Activated CD8-positive, alpha-beta memory T cell treated with anti-CD3 and anti-CD28 coated beads, Interleukin-2, amount 10 ng/mL, durations not matched to agents 7 days and 5 days (primary cell): ENCODE measurements at regions of chr5 and their contacts with region 1.

Region 1: GRCh38 chr5:95846554-95847260 is 24.2 kb upstream of the GLRX start:
- DNase-seq: peak; percentile 77
- ATAC-seq: peak; percentile 57
- H3K4me3 Mint-ChIP-seq: no peak overlapping the region
- H3K27ac Mint-ChIP-seq: no peak overlapping the region
- H3K4me1 Mint-ChIP-seq: peaks cover 39% of the 10 kb centered on the region
- H3K27me3 Mint-ChIP-seq: peaks cover 14% of the 10 kb centered on the region

Region 2: GRCh38 chr5:95646554-95647431 is 199.9 kb before region 1 on chr5 and contains the start of gene RFESD:
- CTCF ChIA-PET with region 1: interaction called, 25 read pairs
- DNase-seq: peak; percentile 98
- ATAC-seq: peak; percentile 97
- H3K4me3 Mint-ChIP-seq: peak within 1 kb of the TSS; percentile 75
- H3K27ac Mint-ChIP-seq: peak within 1 kb of the TSS; percentile 88
- H3K4me1 Mint-ChIP-seq: peaks cover 42% of the 10 kb centered on the region
- H3K27me3 Mint-ChIP-seq: no peaks in the 10 kb centered on the region
- total RNA-seq, gene RFESD: 3.0 to 3.3 TPM

Region 3: GRCh38 chr5:95664204-95664786 is 182.4 kb before region 1 on chr5:
- CTCF ChIA-PET with region 1: interaction called, 29 read pairs
- DNase-seq: no peak
- ATAC-seq: no peak
- H3K4me3 Mint-ChIP-seq: no peak overlapping the region
- H3K27ac Mint-ChIP-seq: no peak overlapping the region
- H3K4me1 Mint-ChIP-seq: peaks cover 1% of the 10 kb centered on the region
- H3K27me3 Mint-ChIP-seq: peaks cover 4% of the 10 kb centered on the region

Region 4: GRCh38 chr5:95822542-95823181 is 24.0 kb before region 1 on chr5 and contains the start of gene GLRX:
- CTCF ChIA-PET with region 1: interaction called, 20 read pairs
- DNase-seq: peak; percentile 80
- ATAC-seq: peak; percentile 54
- H3K4me3 Mint-ChIP-seq: peak within 1 kb of the TSS; percentile 93
- H3K27ac Mint-ChIP-seq: peak within 1 kb of the TSS; percentile 90
- H3K4me1 Mint-ChIP-seq: peaks cover 59% of the 10 kb centered on the region
- H3K27me3 Mint-ChIP-seq: no peaks in the 10 kb centered on the region
- total RNA-seq, gene GLRX: 65.3 to 67.1 TPM

Region 5: GRCh38 chr5:95858661-95859326 is 12.1 kb after region 1 on chr5:
- CTCF ChIA-PET with region 1: interaction called, 11 read pairs
- DNase-seq: peak; percentile 94
- ATAC-seq: peak; percentile 95
- H3K4me3 Mint-ChIP-seq: peak overlapping the region; percentile 53
- H3K27ac Mint-ChIP-seq: peak overlapping the region; percentile 37
- H3K4me1 Mint-ChIP-seq: peaks cover 44% of the 10 kb centered on the region
- H3K27me3 Mint-ChIP-seq: no peaks in the 10 kb centered on the region

Region 6: DNA sequence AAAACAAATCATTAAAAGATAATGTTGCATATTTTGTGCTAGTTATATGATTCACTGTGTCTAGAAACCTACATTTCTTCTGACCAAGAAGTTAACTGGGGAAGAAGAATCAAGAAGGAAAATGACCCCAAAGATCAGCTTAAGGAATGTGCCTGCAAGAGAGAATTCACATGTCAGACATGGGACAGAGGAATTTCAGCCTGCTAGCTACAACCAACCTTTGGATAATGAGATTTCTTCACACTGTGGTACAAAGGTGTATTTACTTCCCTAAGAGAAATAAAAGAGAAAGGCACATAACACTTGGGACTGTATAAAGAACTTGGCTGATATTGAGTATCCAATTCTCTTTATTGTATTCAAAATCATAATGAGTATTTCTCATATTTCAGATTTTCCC is 154.6 kb after region 1 on chr5:
- CTCF ChIA-PET with region 1: no interaction called
- DNase-seq: no peak
- ATAC-seq: no peak
- H3K4me3 Mint-ChIP-seq: no peak overlapping the region
- H3K27ac Mint-ChIP-seq: no peak overlapping the region
- H3K4me1 Mint-ChIP-seq: no peaks in the 10 kb centered on the region
- H3K27me3 Mint-ChIP-seq: peaks cover 2% of the 10 kb centered on the region